Right ventricle myocardium inferior (tissue), 1 donor: ENCODE measurements at regions of chr3 and their contacts with region 1.

Region 1: GRCh38 chr3:155391551-155391958 is 98.1 kb upstream of the STRIT1 start:
- DNase-seq: no peak
- ATAC-seq: peak; percentile 95

Region 2: GRCh38 chr3:155352900-155353490 is 38.6 kb before region 1 on chr3:
- intact Hi-C with region 1: loop called (anchors 5 kb)
- DNase-seq: no peak
- ATAC-seq: peak; percentile 52